ENCODE measurements at regions of chr1 and their contacts with region 1.

Region 1: GRCh38 chr1:155591770-155592169 is 18.2 kb upstream of the MSTO1 start:
- DNase-seq: no peak
- ATAC-seq: peak; percentile 47 to 55

Region 2: DNA sequence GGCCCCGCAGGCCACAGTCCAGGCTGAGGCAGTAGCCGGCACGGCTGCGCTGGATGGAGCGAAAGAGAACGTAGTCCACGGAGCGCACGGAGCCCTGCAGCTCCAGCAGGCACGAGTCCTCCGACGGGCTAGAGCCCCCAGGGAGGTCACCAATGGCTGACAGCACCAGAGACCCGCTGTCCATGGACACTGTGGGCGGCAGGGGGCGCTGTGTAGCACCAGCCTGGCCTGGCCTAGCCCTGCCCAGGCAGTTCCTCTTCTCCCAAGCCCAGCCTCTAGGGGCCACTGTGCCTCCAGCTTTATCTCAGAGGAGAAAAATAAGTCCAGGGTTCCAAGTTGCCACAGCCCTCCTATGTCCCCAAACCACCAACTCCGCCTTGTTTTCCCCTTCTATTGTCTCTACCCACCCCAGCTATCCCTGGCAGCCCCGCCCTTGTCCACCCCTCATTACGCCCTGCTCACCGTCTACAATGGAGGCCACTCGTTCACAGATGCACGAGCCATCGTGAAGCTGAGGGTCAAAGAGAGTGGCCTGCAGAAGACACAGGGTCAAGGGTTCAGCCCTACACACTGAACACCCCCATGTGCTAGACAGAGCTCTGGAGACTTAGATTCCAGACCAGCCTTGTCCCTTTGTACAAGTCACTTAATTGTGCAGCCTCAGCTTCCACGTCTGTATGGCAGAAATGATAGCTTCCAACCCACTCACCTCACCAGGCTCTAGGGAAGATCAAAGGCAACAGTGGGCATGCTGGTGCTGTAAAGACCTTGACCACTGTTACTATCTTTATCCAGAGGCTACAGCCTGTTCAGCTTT is 340.9 kb before region 1 on chr1:
- intact Hi-C with region 1: loop called (anchors 5 kb)
- DNase-seq: peak; percentile 95
- ATAC-seq: peak; percentile 80 to 87

Region 3: DNA sequence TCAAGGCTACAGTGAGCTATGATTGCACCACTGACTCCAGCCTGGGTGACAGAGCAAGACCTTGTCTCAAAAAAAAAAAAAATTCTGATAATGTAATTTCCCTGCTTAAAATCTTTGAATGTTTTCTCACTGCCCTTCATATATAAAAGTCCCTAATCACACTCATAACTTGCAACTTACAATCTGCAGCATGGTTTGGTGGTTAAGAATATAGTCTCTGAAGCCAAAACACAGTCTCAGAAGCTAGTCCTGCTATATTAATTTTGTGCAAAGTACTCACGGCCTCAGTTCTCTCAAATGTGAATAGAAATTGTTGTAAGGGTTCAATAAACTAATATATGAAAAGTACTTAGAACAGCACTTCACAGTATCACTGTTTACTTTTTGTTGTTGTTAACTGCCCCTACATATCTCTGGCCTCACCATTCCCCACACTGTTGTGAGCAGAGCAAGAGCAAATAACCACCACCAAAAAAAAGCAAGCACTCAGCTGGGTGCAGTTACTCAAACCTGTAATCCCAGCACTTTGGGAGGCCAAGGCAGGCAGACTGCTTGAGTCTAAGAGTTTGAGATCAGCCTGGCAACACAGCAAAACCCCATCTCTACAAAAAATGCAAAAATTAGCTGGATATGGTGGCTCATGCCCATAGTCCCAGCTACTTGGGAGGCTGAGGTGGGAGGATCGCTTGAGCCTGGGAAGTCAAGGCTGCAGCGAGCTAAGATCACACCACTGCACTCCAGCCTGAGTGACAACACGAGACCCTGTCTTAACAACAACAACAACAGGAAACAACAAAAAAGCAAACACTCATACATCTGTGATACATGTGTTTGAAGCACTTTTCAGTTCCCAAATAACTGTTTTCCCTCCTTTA is 51.5 kb before region 1 on chr1:
- intact Hi-C with region 1: no loop called
- DNase-seq: no peak
- ATAC-seq: no peak

Measured in left cardiac atrium (tissue), 4 donors.